ENCODE measurements at regions of chr4 and their contacts with region 1.

Region 1: DNA sequence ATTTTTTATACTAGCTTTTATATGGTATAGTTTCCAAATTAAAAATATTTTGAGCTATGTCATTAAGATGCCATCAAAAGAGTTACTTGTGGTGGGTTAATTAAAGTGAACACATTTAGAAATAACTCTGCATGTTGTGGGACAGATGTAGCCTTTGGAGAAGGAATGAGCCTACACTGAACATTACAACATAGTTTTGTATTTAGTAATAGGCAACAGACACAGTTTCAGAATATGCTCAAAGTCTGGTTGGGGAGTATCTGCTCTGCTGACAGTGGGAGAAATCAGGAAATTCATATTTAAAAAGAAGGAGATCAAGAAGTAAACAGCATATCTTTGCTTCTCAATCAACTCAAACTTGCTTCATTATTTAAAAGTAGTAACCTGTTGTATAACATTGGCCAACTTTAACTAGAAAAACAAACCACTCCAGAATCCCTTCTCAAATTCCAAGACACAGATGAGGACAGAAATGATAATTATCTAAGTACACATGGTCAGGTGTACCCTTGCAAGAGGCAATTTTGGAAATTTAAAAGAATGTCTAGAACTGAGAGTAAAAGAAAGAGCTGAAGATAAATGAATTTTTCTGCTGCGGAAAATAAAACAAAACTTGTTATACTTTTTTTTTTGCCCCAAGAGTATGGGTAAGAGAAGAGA is 23.5 kb downstream of the EMCN start:
- DNase-seq: no peak
- ATAC-seq: no peak
- H3K4me3 ChIP-seq: no peak overlapping the region
- H3K27ac ChIP-seq: no peak overlapping the region
- H3K4me1 ChIP-seq: no peaks in the 10 kb centered on the region
- H3K27me3 ChIP-seq: no peaks in the 10 kb centered on the region
- CTCF ChIP-seq: no peak

Region 2: GRCh38 chr4:100093091-100093866 is 401.0 kb before region 1 on chr4:
- CTCF ChIA-PET with region 1: no interaction called
- POLR2A ChIA-PET with region 1: no interaction called
- intact Hi-C with region 1: loop called (anchors 10 kb)
- DNase-seq: peak; percentile 86
- ATAC-seq: peak; percentile 89
- H3K4me3 ChIP-seq: no peak overlapping the region
- H3K27ac ChIP-seq: no peak overlapping the region
- H3K4me1 ChIP-seq: peaks cover 10% of the 10 kb centered on the region
- H3K27me3 ChIP-seq: no peaks in the 10 kb centered on the region
- CTCF ChIP-seq: peak; percentile 77

Region 3: GRCh38 chr4:100509386-100509785 is 15.1 kb after region 1 on chr4:
- CTCF ChIA-PET with region 1: no interaction called
- POLR2A ChIA-PET with region 1: interaction called, 11 read pairs
- intact Hi-C with region 1: no loop called
- DNase-seq: no peak
- ATAC-seq: no peak
- H3K4me3 ChIP-seq: no peak overlapping the region
- H3K27ac ChIP-seq: no peak overlapping the region
- H3K4me1 ChIP-seq: no peaks in the 10 kb centered on the region
- H3K27me3 ChIP-seq: no peaks in the 10 kb centered on the region
- CTCF ChIP-seq: no peak

Measured in PC-3 (cell line).